ENCODE measurements at regions of chr14 and their contacts with region 1.

Region 1: GRCh38 chr14:104657101-104657524 is 32.3 kb upstream of the INF2 start:
- DNase-seq: no peak
- H3K4me3 Mint-ChIP-seq: no peak overlapping the region
- H3K27ac Mint-ChIP-seq: no peak overlapping the region
- H3K4me1 Mint-ChIP-seq: peaks cover 13% of the 10 kb centered on the region
- H3K27me3 Mint-ChIP-seq: no peaks in the 10 kb centered on the region
- CTCF ChIP-seq: no peak

Region 2: GRCh38 chr14:104610749-104611310 is 46.3 kb before region 1 on chr14:
- CTCF ChIA-PET with region 1: interaction called, 19 read pairs
- intact Hi-C with region 1: no loop called
- DNase-seq: no peak
- H3K4me3 Mint-ChIP-seq: no peak overlapping the region
- H3K27ac Mint-ChIP-seq: no peak overlapping the region
- H3K4me1 Mint-ChIP-seq: no peaks in the 10 kb centered on the region
- H3K27me3 Mint-ChIP-seq: peaks cover 92% of the 10 kb centered on the region
- CTCF ChIP-seq: no peak

Region 3: GRCh38 chr14:104908303-104908702 is 251.2 kb after region 1 on chr14:
- CTCF ChIA-PET with region 1: no interaction called
- intact Hi-C with region 1: no loop called
- DNase-seq: no peak
- H3K4me3 Mint-ChIP-seq: no peak overlapping the region
- H3K27ac Mint-ChIP-seq: no peak overlapping the region
- H3K4me1 Mint-ChIP-seq: no peaks in the 10 kb centered on the region
- H3K27me3 Mint-ChIP-seq: peaks cover 54% of the 10 kb centered on the region
- CTCF ChIP-seq: no peak